ENCODE measurements at regions of chr6 and their contacts with region 1.

Region 1: DNA sequence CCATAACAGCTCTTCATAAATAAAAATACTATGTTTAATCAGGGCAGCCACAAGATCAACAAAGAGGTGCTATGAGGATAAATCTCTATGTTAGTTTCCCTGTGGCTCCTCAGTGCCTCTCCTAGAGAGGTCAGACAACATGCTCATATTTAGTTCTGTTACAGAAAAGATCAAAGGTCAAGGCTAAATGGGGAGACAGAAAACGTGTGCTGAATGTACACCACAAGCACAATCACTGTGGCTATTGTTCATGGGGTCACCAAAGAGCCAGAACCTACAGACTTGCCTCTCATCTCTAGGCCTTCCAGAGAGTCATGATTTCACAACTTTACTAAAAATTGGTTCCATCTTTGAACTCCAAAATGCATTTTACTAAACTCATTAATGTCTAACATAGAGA is 409.8 kb downstream of the HACE1 start:
- DNase-seq: no peak
- ATAC-seq: no peak
- H3K4me3 ChIP-seq: no peak overlapping the region
- H3K27ac ChIP-seq: no peak overlapping the region
- H3K4me1 ChIP-seq: no peaks in the 10 kb centered on the region
- H3K27me3 ChIP-seq: no peaks in the 10 kb centered on the region
- CTCF ChIP-seq: no peak

Region 2: GRCh38 chr6:103842615-103843014 is 607.3 kb before region 1 on chr6:
- intact Hi-C with region 1: loop called in 1 of 10 experiments (anchors 10 kb)
- DNase-seq: no peak
- ATAC-seq: no peak
- H3K4me3 ChIP-seq: no peak overlapping the region
- H3K27ac ChIP-seq: no peak overlapping the region
- H3K4me1 ChIP-seq: no peaks in the 10 kb centered on the region
- H3K27me3 ChIP-seq: no peaks in the 10 kb centered on the region
- CTCF ChIP-seq: no peak

Region 3: GRCh38 chr6:104256646-104257045 is 193.3 kb before region 1 on chr6:
- intact Hi-C with region 1: no loop called
- DNase-seq: no peak
- ATAC-seq: no peak
- H3K4me3 ChIP-seq: no peak overlapping the region
- H3K27ac ChIP-seq: no peak overlapping the region
- H3K4me1 ChIP-seq: no peaks in the 10 kb centered on the region
- H3K27me3 ChIP-seq: no peaks in the 10 kb centered on the region
- CTCF ChIP-seq: no peak